ENCODE measurements at regions of chr15 and their contacts with region 1.

Region 1: DNA sequence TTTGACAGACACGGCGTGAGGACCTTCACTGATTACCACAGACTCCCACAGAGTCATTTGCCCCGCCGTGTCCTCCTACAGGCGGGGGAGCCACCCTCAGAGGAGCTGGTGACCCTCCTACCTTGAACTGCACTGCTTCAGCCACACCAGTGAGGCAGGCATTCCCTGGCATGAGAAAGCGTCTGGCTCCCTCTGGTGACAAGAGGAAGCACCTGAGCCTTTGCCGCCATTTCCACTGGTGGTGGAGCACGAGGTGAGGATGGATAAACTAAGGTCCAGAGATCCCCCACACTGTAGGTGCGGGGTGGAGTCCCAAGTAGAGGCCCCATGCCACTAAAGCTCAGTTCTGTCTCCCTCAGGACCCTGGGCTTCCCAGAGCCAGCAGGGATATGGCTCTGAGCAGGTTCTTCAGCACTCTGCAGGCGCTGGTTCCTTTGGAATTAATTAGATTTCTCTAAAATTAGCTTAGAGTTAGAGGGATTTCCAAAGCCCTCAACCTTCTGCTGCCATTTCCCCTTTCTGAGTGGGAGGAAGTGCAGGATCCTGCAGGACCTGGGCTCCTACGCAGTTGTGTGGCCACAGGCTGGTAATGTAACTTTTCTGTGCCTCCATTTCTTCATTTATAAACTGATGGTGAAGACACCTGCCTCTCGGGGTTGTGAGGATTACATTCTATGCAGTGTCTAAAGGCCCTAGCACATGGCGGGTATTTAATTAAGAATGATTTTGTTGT is 224.0 kb downstream of the SLCO3A1 start:
- DNase-seq: peak; percentile 47 to 63
- H3K4me3 ChIP-seq: no peak overlapping the region
- H3K27ac ChIP-seq: no peak overlapping the region
- H3K4me1 ChIP-seq: peaks cover 7% of the 10 kb centered on the region
- H3K27me3 ChIP-seq: no peaks in the 10 kb centered on the region
- CTCF ChIP-seq: peak; percentile 76

Region 2: GRCh38 chr15:91055548-91056331 is 1021.8 kb before region 1 on chr15:
- CTCF ChIA-PET with region 1: no interaction called
- POLR2A ChIA-PET with region 1: no interaction called
- intact Hi-C with region 1: loop called (anchors 2 kb)
- DNase-seq: peak; percentile 43 to 54
- H3K4me3 ChIP-seq: no peak overlapping the region
- H3K27ac ChIP-seq: no peak overlapping the region
- H3K4me1 ChIP-seq: no peaks in the 10 kb centered on the region
- H3K27me3 ChIP-seq: peaks cover 90% of the 10 kb centered on the region
- CTCF ChIP-seq: peak; percentile 79

Region 3: DNA sequence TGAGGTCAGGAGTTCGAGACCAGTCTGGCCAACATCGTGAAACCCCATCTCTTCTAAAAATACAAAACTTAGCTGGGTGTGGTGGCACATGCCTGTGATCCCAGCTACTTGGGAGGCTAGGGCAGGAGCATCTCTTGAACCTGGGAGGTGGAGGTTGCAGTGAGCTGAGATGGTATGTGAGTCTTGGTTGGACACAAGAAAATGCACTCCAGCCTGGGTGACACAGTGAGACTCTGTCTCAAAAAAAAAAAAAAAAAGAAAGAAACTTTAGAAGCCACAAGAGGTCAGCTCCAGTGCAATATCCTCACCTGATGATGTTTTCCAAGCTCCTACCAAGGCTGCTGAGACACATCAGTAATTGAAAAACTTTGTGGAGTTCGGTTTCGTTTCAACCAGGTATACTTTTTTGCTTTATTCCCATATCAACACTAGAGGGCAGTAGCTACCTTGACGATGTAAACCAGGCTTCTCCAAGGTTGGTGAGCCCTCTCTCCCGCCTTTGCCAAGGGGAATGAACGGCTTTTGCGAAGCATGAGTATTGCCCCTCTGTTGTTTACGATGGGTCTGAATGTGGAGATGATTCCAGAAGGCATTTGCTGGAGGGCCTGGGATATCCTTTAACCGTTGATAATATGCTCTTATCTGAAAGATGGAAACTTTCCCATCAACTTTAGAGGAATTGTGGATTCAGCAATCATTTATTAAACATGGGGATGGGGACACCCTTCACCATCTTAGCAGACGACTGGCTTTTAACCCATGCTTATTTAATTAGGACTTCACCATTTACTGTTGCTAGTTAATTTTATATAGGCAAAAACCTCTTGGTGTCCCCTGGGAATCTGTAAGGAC is 774.7 kb before region 1 on chr15:
- CTCF ChIA-PET with region 1: no interaction called
- POLR2A ChIA-PET with region 1: interaction called, 6 read pairs
- intact Hi-C with region 1: loop called (anchors 1 kb)
- DNase-seq: peak; percentile 29 to 61
- H3K4me3 ChIP-seq: no peak overlapping the region
- H3K27ac ChIP-seq: no peak overlapping the region
- H3K4me1 ChIP-seq: 0 out of 2 replicates have a peak, but pooled peaks cover 4% of the 10 kb centered on the region
- H3K27me3 ChIP-seq: no peaks in the 10 kb centered on the region
- CTCF ChIP-seq: peak; percentile 86

Region 4: GRCh38 chr15:91522663-91523332 is 554.7 kb before region 1 on chr15:
- CTCF ChIA-PET with region 1: no interaction called
- POLR2A ChIA-PET with region 1: no interaction called
- intact Hi-C with region 1: loop called (anchors 2 kb)
- DNase-seq: no peak
- H3K4me3 ChIP-seq: no peak overlapping the region
- H3K27ac ChIP-seq: peak overlapping the region; percentile 56
- H3K4me1 ChIP-seq: peaks cover 9% of the 10 kb centered on the region
- H3K27me3 ChIP-seq: no peaks in the 10 kb centered on the region
- CTCF ChIP-seq: peak; percentile 48

Region 5: GRCh38 chr15:91706322-91707032 is 371.0 kb before region 1 on chr15:
- CTCF ChIA-PET with region 1: no interaction called
- POLR2A ChIA-PET with region 1: no interaction called
- intact Hi-C with region 1: loop called (anchors 1 kb)
- DNase-seq: peak; percentile 57 to 60
- H3K4me3 ChIP-seq: no peak overlapping the region
- H3K27ac ChIP-seq: no peak overlapping the region
- H3K4me1 ChIP-seq: peaks cover 14% of the 10 kb centered on the region
- H3K27me3 ChIP-seq: no peaks in the 10 kb centered on the region
- CTCF ChIP-seq: peak; percentile 92

Region 6: GRCh38 chr15:91930092-91930491 is 147.4 kb before region 1 on chr15:
- CTCF ChIA-PET with region 1: no interaction called
- POLR2A ChIA-PET with region 1: no interaction called
- intact Hi-C with region 1: no loop called
- DNase-seq: no peak
- H3K4me3 ChIP-seq: no peak overlapping the region
- H3K27ac ChIP-seq: no peak overlapping the region
- H3K4me1 ChIP-seq: no peaks in the 10 kb centered on the region
- H3K27me3 ChIP-seq: no peaks in the 10 kb centered on the region
- CTCF ChIP-seq: no peak

Region 7: GRCh38 chr15:91965501-91966184 is 111.9 kb before region 1 on chr15:
- CTCF ChIA-PET with region 1: no interaction called
- POLR2A ChIA-PET with region 1: no interaction called
- intact Hi-C with region 1: loop called (anchors 5 kb)
- DNase-seq: peak; percentile 89 to 98
- H3K4me3 ChIP-seq: peak overlapping the region; percentile 24; the same call in 1 of the 2 replicates
- H3K27ac ChIP-seq: peak overlapping the region; percentile 98
- H3K4me1 ChIP-seq: peaks cover 50% of the 10 kb centered on the region
- H3K27me3 ChIP-seq: no peaks in the 10 kb centered on the region
- CTCF ChIP-seq: no peak

Region 8: DNA sequence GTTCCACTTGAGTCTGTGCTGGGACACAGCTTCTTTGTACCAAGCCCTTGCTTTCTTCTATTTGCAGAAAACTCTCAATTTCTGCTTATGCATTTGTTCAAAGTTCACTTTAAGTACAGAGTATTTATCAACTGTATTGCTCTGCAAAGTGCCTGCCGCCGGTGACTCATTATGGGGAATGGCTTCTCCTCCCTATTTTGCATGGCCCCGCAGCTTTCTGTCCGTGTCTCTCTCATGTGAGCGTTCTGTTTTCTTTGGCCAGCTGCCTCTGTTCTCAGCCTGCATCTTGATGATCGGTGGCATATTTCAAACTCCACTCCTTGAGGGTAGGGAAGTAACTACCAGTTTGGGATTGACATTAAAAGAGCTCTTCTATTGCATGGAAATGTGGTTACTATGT is 287.5 kb after region 1 on chr15:
- CTCF ChIA-PET with region 1: no interaction called
- POLR2A ChIA-PET with region 1: no interaction called
- intact Hi-C with region 1: no loop called
- DNase-seq: peak in 1 of 2 experiments; percentile 41
- H3K4me3 ChIP-seq: no peak overlapping the region
- H3K27ac ChIP-seq: no peak overlapping the region
- H3K4me1 ChIP-seq: no peaks in the 10 kb centered on the region; the same call in 1 of the 2 replicates
- H3K27me3 ChIP-seq: peaks cover 14% of the 10 kb centered on the region; the same call in 1 of the 2 replicates
- CTCF ChIP-seq: no peak